A549 (cell line): ENCODE measurements at regions of chr5 and their contacts with region 1.

Region 1: GRCh38 chr5:5492087-5492933 is 69.8 kb downstream of the ICE1 start:
- DNase-seq: peak; percentile 44 to 67
- ATAC-seq: peak; percentile 73 to 79; a peak in 5 of 6 replicates
- H3K4me3 ChIP-seq: no peak overlapping the region
- H3K27ac ChIP-seq: no peak overlapping the region
- H3K4me1 ChIP-seq: no peaks in the 10 kb centered on the region
- CTCF ChIP-seq: peak; percentile 79
- EP300 ChIP-seq: no peak
- POLR2A ChIP-seq: no peak
- RAD21 ChIP-seq: peak; percentile 78 to 85

Region 2: DNA sequence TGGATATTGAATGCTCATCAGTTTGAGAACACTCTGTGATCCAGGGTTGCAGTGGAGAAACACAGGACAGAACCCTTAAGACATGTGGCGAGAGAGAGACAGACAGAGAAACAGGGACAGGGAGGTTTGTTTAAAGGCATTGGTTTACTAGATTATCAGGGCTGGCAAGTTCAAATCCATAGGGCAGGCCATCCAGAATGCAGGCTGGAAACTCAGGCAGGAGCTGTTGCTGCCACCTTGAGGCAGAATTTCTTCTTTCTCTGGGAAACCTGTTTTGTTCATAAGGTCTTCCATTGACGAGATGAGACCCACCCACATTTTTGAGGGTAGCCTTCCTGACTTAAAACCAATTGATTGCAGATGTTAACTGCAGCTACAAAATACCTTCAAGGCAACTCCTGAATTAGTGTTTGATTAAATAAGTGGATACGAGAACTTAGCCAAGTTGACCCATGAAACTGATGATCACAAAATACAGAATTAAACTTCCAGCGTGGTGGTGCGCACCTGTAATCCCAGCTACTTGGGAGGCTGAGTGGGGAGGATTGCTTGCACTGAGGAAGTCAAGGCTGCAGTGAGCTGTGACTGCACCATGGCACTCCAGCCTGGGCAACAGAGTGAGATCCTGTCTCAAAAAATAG is 1084.7 kb after region 1 on chr5:
- CTCF ChIA-PET with region 1: interaction called, 10 read pairs
- POLR2A ChIA-PET with region 1: no interaction called
- DNase-seq: peak; percentile 41 to 56
- ATAC-seq: peak; percentile 32 to 74; a peak in 4 of 6 replicates
- H3K4me3 ChIP-seq: no peak overlapping the region
- H3K27ac ChIP-seq: no peak overlapping the region
- H3K4me1 ChIP-seq: no peaks in the 10 kb centered on the region
- CTCF ChIP-seq: peak; percentile 65
- EP300 ChIP-seq: no peak
- POLR2A ChIP-seq: no peak
- RAD21 ChIP-seq: peak; percentile 69 to 81